ENCODE measurements at regions of chr5 and their contacts with region 1.

Region 1: GRCh38 chr5:170809551-170809950 is 26.0 kb downstream of the GABRP start:
- DNase-seq: peak; percentile 28 to 64 (median 39)
- H3K4me3 ChIP-seq: no peak overlapping the region
- H3K27ac ChIP-seq: no peak overlapping the region
- H3K4me1 ChIP-seq: no peaks in the 10 kb centered on the region
- H3K27me3 ChIP-seq: no peaks in the 10 kb centered on the region
- CTCF ChIP-seq: peak in 5 of 6 experiments; percentile 50 to 75 (median 62)
- POLR2A ChIP-seq: no peak

Region 2: GRCh38 chr5:170917113-170917512 is 107.6 kb after region 1 on chr5:
- intact Hi-C with region 1: loop called in 1 of 2 experiments (anchors 10 kb)
- DNase-seq: no peak
- H3K4me3 ChIP-seq: no peak overlapping the region
- H3K27ac ChIP-seq: no peak overlapping the region
- H3K4me1 ChIP-seq: no peaks in the 10 kb centered on the region
- H3K27me3 ChIP-seq: no peaks in the 10 kb centered on the region
- CTCF ChIP-seq: peak in 5 of 6 experiments; percentile 21 to 44 (median 36)
- POLR2A ChIP-seq: no peak

Region 3: DNA sequence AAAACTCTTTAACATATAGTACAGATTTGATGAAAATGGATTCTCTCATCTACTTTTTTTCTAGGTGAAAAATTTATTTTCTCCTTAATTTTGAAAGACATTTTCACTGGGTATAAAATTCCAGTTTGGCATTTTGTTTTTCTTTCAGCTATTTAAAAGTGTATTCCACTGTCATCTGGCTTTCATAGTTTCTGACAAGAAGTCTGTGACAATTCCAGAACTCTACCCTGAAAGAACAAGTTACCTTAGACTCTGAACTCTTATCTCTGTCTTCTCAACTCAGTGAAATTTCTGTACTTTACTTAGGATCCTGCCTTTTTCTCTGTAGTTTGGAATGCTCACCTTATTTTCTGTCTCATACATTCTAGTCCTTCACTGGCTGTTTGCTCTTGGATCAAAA is 214.0 kb after region 1 on chr5:
- intact Hi-C with region 1: no loop called
- DNase-seq: no peak
- H3K4me3 ChIP-seq: no peak overlapping the region
- H3K27ac ChIP-seq: no peak overlapping the region
- H3K4me1 ChIP-seq: no peaks in the 10 kb centered on the region
- H3K27me3 ChIP-seq: no peaks in the 10 kb centered on the region
- CTCF ChIP-seq: no peak
- POLR2A ChIP-seq: no peak

Region 4: DNA sequence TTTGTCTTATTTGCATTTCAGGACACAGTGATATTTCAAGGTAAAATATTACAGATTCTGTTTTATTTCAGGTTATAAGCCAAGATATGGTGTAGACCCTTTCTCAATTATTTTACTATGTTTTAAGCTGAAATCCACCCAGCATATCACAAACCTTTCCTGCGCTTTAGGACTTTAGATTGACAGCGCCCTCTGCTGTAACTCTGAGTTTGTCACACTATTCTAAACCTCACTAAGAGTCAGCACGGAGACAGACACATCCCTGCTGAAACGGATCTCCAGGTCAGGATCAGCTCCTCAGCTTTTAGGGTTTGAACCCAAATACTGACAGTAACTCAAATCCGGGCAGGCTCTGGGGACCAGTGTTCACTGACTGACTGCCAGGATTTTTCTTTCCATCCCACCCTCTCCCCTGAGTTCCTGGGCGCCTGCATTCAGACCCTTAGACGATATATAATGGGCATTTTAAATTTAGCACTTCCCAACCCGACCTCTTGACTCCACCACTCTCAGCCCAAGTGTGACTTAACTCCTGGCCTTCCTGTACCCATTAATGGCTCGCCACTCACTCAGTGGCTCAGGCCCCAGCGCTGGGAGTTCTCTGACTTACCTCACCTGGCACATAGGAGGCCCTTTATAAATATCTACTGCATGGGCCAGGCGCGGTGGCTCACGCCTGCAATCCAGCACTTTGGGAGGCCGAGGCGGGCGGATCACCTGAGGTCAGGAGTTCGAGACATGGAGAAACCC is 533.0 kb after region 1 on chr5:
- intact Hi-C with region 1: loop called in 1 of 2 experiments (anchors 5 kb)
- DNase-seq: peak; percentile 25 to 73 (median 47)
- H3K4me3 ChIP-seq: no peak overlapping the region
- H3K27ac ChIP-seq: no peak overlapping the region
- H3K4me1 ChIP-seq: no peaks in the 10 kb centered on the region
- H3K27me3 ChIP-seq: peaks cover 3% of the 10 kb centered on the region
- CTCF ChIP-seq: peak; percentile 47 to 67 (median 58)
- POLR2A ChIP-seq: no peak

Measured in adrenal gland (tissue), 19 donors.